ENCODE measurements at regions of chr11 and their contacts with region 1.

Region 1: GRCh38 chr11:13023423-13023822 is 14.3 kb downstream of the RASSF10 start:
- DNase-seq: no peak
- ATAC-seq: no peak
- H3K4me3 ChIP-seq: no peak overlapping the region
- H3K27ac ChIP-seq: no peak overlapping the region
- H3K4me1 ChIP-seq: no peaks in the 10 kb centered on the region
- H3K27me3 ChIP-seq: peaks cover 0 to 9% of the 10 kb centered on the region in 2 experiments; a peak in 2 of 5 replicates
- CTCF ChIP-seq: no peak
- EP300 ChIP-seq: no peak
- POLR2A ChIP-seq: no peak
- RAD21 ChIP-seq: no peak

Region 2: DNA sequence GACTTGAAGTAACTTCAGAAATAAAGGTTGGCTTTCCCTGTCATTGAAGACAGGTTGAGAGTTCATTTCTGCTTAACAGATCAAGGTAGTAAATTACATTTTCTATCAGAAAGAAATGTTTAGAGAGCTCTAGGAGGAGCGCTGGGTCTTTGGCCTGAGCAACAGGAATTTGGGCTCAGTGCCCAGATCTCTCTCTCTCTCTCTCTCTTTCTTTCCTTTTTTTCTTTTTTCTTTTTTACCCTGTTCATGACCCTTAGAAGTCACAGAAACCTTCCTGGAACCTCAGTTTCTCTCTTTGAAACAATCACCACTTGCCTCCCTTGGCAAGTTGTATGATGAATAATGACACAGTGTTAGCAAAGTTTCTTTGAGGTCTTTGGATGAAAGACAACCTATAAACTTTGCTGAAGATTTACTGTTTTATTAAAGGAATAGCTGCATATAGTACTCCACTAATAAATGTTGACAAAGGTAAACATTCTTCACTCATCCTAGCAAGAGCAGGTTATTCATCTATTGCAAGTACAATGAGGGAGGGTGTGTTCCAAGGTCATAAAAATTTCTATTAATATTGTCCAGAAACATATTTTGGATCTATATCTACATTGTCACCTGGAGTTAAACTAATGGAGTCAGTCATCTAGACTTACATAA is 49.8 kb before region 1 on chr11:
- CTCF ChIA-PET with region 1: no interaction called
- POLR2A ChIA-PET with region 1: no interaction called
- in situ Hi-C with region 1: no loop called
- intact Hi-C with region 1: no loop called
- DNase-seq: no peak
- ATAC-seq: no peak
- H3K4me3 ChIP-seq: no peak overlapping the region
- H3K27ac ChIP-seq: no peak overlapping the region
- H3K4me1 ChIP-seq: no peaks in the 10 kb centered on the region
- H3K27me3 ChIP-seq: no peaks in the 10 kb centered on the region
- CTCF ChIP-seq: no peak
- EP300 ChIP-seq: no peak
- POLR2A ChIP-seq: no peak
- RAD21 ChIP-seq: no peak

Region 3: GRCh38 chr11:12989428-12990161 is 33.8 kb before region 1 on chr11:
- CTCF ChIA-PET with region 1: no interaction called
- POLR2A ChIA-PET with region 1: no interaction called
- in situ Hi-C with region 1: no loop called
- intact Hi-C with region 1: loop called (anchors 1 kb)
- DNase-seq: no peak
- ATAC-seq: no peak
- H3K4me3 ChIP-seq: no peak overlapping the region
- H3K27ac ChIP-seq: no peak overlapping the region
- H3K4me1 ChIP-seq: no peaks in the 10 kb centered on the region
- H3K27me3 ChIP-seq: no peaks in the 10 kb centered on the region
- CTCF ChIP-seq: no peak
- EP300 ChIP-seq: no peak
- POLR2A ChIP-seq: no peak
- RAD21 ChIP-seq: no peak

Region 4: GRCh38 chr11:13008625-13009475 is 14.6 kb before region 1 on chr11 and contains the start of gene RASSF10:
- CTCF ChIA-PET with region 1: no interaction called
- POLR2A ChIA-PET with region 1: no interaction called
- in situ Hi-C with region 1: no loop called
- intact Hi-C with region 1: no loop called
- DNase-seq: no peak
- ATAC-seq: peak; percentile 12
- H3K4me3 ChIP-seq: no peak within 1 kb of the TSS
- H3K27ac ChIP-seq: peak within 1 kb of the TSS; percentile 41
- H3K4me1 ChIP-seq: peaks cover 61% of the 10 kb centered on the region
- H3K27me3 ChIP-seq: no peaks in the 10 kb centered on the region
- CTCF ChIP-seq: no peak
- EP300 ChIP-seq: no peak
- POLR2A ChIP-seq: no peak
- RAD21 ChIP-seq: no peak
- total RNA-seq, gene RASSF10: not detected in 2 replicates

Region 5: DNA sequence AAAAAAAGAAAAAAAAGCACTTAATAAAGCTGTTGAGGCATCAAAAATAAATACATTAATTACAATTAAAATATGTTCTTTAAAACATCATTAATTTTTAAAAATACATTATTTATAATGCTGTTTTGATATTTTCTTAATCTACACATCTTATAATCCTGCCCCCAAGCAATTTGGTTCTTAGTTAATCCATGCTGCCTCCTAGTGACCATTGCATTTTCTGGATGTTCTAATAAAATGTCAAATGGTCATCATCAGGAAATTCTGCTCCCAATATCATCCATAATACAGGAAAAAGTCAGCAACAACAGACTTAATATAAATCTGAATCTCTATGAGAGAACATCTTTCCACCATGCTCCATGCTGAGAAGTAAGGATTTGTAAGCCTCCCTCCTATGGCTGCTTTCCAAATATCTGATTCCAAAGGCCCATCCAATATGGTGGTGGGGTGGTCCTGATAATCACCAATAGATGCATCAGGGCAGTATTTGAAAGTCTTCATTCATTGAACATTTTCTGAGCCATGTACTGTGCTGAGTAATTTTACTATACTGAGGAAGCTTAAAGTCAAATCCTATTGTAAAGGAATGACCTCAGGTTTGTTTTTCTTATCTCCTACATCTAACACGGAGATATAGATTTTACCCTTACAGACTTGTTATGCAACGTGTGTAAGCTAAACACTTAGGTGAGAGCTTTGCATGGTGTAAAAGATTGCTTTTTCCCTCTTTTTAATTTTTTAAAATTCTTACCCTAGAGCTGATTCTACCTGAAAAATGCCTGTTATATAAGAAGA is 129.5 kb after region 1 on chr11:
- CTCF ChIA-PET with region 1: no interaction called
- POLR2A ChIA-PET with region 1: no interaction called
- in situ Hi-C with region 1: no loop called
- intact Hi-C with region 1: no loop called
- DNase-seq: peak; percentile 25
- ATAC-seq: no peak
- H3K4me3 ChIP-seq: no peak overlapping the region
- H3K27ac ChIP-seq: no peak overlapping the region
- H3K4me1 ChIP-seq: peaks cover 55% of the 10 kb centered on the region
- H3K27me3 ChIP-seq: no peaks in the 10 kb centered on the region; a peak in 1 of 5 replicates
- CTCF ChIP-seq: peak; percentile 59
- EP300 ChIP-seq: no peak
- POLR2A ChIP-seq: no peak
- RAD21 ChIP-seq: peak; percentile 59

Region 6: DNA sequence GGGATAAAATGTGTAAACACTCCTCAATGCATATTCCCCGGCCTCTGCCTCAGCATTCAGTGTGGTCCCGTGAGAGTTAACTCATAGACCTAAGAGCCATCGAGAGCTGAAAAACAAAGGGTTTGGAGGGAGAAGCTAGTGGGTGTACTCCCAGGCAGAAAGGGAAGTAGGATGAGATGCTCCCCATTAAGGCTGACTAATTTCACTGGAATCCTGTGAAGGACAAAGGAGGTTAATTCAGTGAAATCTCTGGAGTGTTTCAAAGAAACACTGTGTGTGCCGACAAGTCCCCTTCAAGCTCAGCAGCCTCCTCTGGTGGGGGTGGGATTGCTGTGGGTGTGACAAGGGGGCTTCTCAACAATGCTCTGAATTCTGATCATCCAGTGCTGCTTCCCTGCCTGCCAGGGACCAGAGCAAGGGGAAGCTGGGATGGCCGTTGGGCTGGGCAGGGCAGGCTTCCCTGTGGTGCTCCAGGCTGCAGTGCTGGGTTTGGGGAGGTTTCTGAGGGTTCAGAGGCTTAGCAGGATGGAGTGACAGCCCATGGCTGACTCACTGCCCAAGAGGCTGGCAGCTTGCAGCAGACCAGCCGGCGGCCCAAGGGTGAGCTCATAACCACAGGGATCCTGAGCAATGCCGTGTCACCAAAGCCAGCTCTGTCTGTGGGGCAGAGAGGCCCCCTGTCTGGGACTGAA is 192.7 kb after region 1 on chr11:
- CTCF ChIA-PET with region 1: no interaction called
- POLR2A ChIA-PET with region 1: no interaction called
- in situ Hi-C with region 1: no loop called
- intact Hi-C with region 1: no loop called
- DNase-seq: peak; percentile 37
- ATAC-seq: peak; percentile 68
- H3K4me3 ChIP-seq: no peak overlapping the region
- H3K27ac ChIP-seq: no peak overlapping the region
- H3K4me1 ChIP-seq: no peaks in the 10 kb centered on the region
- H3K27me3 ChIP-seq: peaks cover 0 to 26% of the 10 kb centered on the region in 2 experiments; a peak in 2 of 5 replicates
- CTCF ChIP-seq: no peak
- EP300 ChIP-seq: no peak
- POLR2A ChIP-seq: no peak
- RAD21 ChIP-seq: no peak